CD8-positive, alpha-beta T cell (primary cell): ENCODE measurements at regions of chr12 and their contacts with region 1.

Region 1: DNA sequence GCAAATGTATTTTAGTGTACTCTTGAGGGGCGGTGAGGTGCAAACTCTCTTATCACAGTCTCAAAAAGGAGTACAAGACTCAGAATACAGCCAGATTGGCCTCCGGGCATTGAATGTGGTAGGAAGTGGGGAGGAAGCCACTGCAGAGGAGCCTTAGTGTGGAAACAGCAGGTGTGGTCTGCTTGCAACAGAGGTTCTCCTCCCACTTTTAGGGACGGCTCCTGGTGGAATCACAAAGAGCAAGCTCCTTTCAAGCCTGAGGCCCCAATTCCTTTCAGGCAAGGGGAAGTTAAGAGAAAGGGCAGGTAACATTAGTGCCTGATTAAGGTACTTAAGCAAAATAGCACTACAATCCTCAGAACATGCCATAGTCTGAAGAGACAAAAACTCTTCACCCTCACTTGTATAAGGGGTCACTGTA is 23.7 kb upstream of the SLC2A3 start:
- DNase-seq: peak in 7 of 9 experiments; percentile 45 to 81 (median 62)
- ATAC-seq: peak; percentile 25
- H3K4me3 ChIP-seq: peak overlapping the region; percentile 58 to 65
- H3K4me3 Mint-ChIP-seq: peak overlapping the region; percentile 87
- H3K27ac ChIP-seq: peak overlapping the region; percentile 84 to 85
- H3K27ac Mint-ChIP-seq: peak overlapping the region; percentile 94
- H3K4me1 ChIP-seq: peaks cover 33% of the 10 kb centered on the region
- H3K4me1 Mint-ChIP-seq: peaks cover 39% of the 10 kb centered on the region
- H3K27me3 ChIP-seq: no peaks in the 10 kb centered on the region
- H3K27me3 Mint-ChIP-seq: no peaks in the 10 kb centered on the region
- CTCF ChIP-seq: no peak

Region 2: DNA sequence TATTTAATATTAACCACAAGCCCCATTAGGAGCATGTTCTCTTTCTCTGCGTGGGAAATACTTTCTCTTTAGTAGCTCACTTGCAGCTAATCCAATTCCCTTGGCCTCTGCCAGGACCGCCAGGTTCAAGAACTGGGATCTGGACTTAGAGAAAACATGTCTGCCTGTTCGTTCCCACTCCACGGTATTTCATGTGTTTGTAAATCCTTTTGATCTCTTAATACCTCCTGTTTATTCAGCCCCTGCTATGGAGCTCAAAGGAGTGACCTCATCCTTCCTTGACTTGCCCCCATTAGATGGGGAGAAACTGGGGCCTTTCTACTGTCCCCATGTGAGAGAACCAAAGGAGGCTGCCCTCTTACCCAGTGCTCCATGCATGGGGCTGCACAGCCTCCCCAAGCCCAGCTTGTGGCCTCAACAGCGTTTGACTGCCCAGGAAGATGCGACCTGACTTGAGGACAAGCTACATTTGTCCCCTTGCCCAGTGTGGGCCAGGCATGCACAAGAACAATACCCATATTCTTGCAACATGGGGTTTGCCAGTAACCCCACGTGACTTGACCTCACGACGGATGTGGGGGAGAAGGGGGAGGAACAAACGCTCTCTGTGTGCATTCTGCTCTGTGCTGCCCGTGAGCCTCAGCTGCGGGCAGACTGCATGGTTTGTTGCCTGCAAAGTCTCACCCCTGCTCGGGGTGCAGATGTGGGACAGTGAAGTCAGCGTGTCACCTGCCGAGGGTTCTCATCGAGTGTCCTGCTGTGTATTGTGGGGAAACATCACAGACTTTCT is 1729.2 kb before region 1 on chr12:
- CTCF ChIA-PET with region 1: no interaction called
- POLR2A ChIA-PET with region 1: no interaction called
- intact Hi-C with region 1: no loop called
- DNase-seq: peak; percentile 53 to 91 (median 79)
- ATAC-seq: peak; percentile 96
- H3K4me3 ChIP-seq: no peak overlapping the region
- H3K4me3 Mint-ChIP-seq: peak overlapping the region; percentile 38
- H3K27ac ChIP-seq: peak overlapping the region; percentile 3 to 55
- H3K27ac Mint-ChIP-seq: peak overlapping the region; percentile 90
- H3K4me1 ChIP-seq: peaks cover 33% of the 10 kb centered on the region
- H3K4me1 Mint-ChIP-seq: peaks cover 34% of the 10 kb centered on the region
- H3K27me3 ChIP-seq: no peaks in the 10 kb centered on the region
- H3K27me3 Mint-ChIP-seq: no peaks in the 10 kb centered on the region
- CTCF ChIP-seq: no peak

Region 3: GRCh38 chr12:7638760-7639555 is 320.8 kb before region 1 on chr12:
- CTCF ChIA-PET with region 1: no interaction called
- POLR2A ChIA-PET with region 1: no interaction called
- intact Hi-C with region 1: no loop called
- DNase-seq: peak; percentile 40 to 89 (median 77)
- ATAC-seq: peak; percentile 67
- H3K4me3 ChIP-seq: peak overlapping the region; percentile 35 to 39
- H3K4me3 Mint-ChIP-seq: peak overlapping the region; percentile 69
- H3K27ac ChIP-seq: peak overlapping the region; percentile 30 to 40
- H3K27ac Mint-ChIP-seq: peak overlapping the region; percentile 73
- H3K4me1 ChIP-seq: peaks cover 32% of the 10 kb centered on the region
- H3K4me1 Mint-ChIP-seq: peaks cover 38% of the 10 kb centered on the region
- H3K27me3 ChIP-seq: no peaks in the 10 kb centered on the region
- H3K27me3 Mint-ChIP-seq: peaks cover 4% of the 10 kb centered on the region
- CTCF ChIP-seq: peak; percentile 79

Region 4: GRCh38 chr12:7859552-7859951 is 100.2 kb before region 1 on chr12:
- CTCF ChIA-PET with region 1: no interaction called
- POLR2A ChIA-PET with region 1: interaction called, 4 read pairs
- intact Hi-C with region 1: loop called in 1 of 2 experiments (anchors 1 kb)
- DNase-seq: no peak
- ATAC-seq: no peak
- H3K4me3 ChIP-seq: no peak overlapping the region
- H3K4me3 Mint-ChIP-seq: no peak overlapping the region
- H3K27ac ChIP-seq: no peak overlapping the region
- H3K27ac Mint-ChIP-seq: no peak overlapping the region
- H3K4me1 ChIP-seq: no peaks in the 10 kb centered on the region
- H3K4me1 Mint-ChIP-seq: peaks cover 9% of the 10 kb centered on the region
- H3K27me3 ChIP-seq: no peaks in the 10 kb centered on the region
- H3K27me3 Mint-ChIP-seq: peaks cover 5% of the 10 kb centered on the region
- CTCF ChIP-seq: no peak

Region 5: DNA sequence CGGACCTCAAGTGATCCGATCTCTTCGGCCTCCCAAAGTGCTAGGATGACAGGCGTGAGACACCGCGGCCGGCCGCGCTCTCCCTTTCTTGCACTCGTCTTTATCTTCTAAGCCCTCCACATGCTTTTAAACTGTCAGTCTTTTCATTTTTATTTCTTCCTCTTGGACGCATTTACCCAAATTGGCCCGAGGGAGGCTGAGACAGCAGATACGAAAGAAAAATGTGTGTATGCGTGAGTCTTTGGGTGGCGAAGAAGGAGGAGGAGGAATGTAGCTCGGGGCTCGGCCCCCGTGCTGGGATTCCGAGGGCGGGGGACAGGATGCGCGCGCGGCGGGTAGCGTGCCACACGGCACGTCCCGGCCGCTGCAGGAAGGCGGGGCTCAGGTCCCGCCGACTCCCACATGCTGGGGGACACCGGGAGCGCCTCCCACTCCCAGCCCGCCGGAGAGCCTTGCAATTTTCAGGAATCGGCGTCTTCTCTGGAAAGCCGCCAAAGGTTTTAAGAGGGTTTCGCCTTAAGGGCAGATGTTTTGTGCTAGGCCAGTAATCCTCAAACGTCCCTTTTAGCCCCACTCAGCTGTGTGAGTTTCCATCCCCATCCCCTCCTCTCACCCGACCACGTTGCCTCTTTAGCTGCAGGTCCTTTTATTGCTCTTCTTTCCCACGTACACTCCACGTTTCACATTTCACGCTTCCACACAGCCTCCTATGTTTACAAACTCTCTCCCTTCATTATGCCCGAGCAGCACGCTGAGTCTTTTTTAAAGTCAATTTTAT is 11.0 kb after region 1 on chr12:
- CTCF ChIA-PET with region 1: interaction called, 19 read pairs
- POLR2A ChIA-PET with region 1: interaction called, 25 read pairs
- intact Hi-C with region 1: loop called (anchors 1 kb)
- DNase-seq: peak; percentile 61 to 96 (median 88)
- ATAC-seq: peak; percentile 87
- H3K4me3 ChIP-seq: peak overlapping the region; percentile 67 to 90
- H3K4me3 Mint-ChIP-seq: peak overlapping the region; percentile 83
- H3K27ac ChIP-seq: peak overlapping the region; percentile 90 to 94
- H3K27ac Mint-ChIP-seq: peak overlapping the region; percentile 96
- H3K4me1 ChIP-seq: peaks cover 15% of the 10 kb centered on the region
- H3K4me1 Mint-ChIP-seq: peaks cover 27% of the 10 kb centered on the region
- H3K27me3 ChIP-seq: no peaks in the 10 kb centered on the region
- H3K27me3 Mint-ChIP-seq: no peaks in the 10 kb centered on the region
- CTCF ChIP-seq: no peak

Region 6: GRCh38 chr12:7989827-7990551 is 30.3 kb after region 1 on chr12:
- CTCF ChIA-PET with region 1: interaction called, 30 read pairs
- POLR2A ChIA-PET with region 1: interaction called, 6 read pairs
- intact Hi-C with region 1: loop called (anchors 1 to 2 kb)
- DNase-seq: peak; percentile 21 to 82 (median 62)
- ATAC-seq: peak; percentile 90
- H3K4me3 ChIP-seq: no peak overlapping the region
- H3K4me3 Mint-ChIP-seq: peak overlapping the region; percentile 63
- H3K27ac ChIP-seq: peak overlapping the region; percentile 28 to 60
- H3K27ac Mint-ChIP-seq: peak overlapping the region; percentile 88
- H3K4me1 ChIP-seq: peaks cover 13% of the 10 kb centered on the region
- H3K4me1 Mint-ChIP-seq: peaks cover 19% of the 10 kb centered on the region
- H3K27me3 ChIP-seq: no peaks in the 10 kb centered on the region
- H3K27me3 Mint-ChIP-seq: no peaks in the 10 kb centered on the region
- CTCF ChIP-seq: no peak

Region 7: DNA sequence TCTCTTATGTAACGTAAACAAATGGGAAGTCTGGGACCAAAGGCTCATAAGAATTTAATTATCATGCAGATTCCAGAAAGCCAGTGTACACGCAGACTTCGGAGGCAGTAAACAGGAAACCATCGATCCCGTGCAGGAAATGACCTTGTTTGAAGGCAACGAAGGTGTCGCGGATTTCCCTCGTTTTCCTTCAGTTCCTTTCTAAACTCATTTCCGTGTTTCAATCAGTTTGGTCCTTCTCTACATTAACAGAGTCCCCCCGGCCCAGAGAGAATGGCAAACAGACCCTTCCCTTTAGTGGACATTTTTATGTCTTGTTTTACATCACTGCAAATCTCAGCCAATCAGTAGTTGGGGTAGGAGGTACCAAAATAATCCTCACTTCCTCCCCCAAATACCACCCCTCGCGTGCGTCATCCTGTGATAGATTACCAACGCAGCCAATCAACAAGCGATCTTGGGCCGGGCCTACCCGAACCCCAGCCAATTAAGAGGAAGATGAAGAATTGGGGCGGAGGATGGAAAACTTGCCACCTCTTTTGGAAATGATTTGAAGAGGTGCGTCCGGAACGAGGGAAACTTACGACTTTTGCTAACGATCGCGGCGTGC is 66.7 kb after region 1 on chr12:
- CTCF ChIA-PET with region 1: no interaction called
- POLR2A ChIA-PET with region 1: interaction called, 11 read pairs
- intact Hi-C with region 1: loop called (anchors 1 kb)
- DNase-seq: peak; percentile 90 to 99 (median 94)
- ATAC-seq: peak; percentile 89
- H3K4me3 ChIP-seq: peak overlapping the region; percentile 84 to 93
- H3K4me3 Mint-ChIP-seq: peak overlapping the region; percentile 95
- H3K27ac ChIP-seq: peak overlapping the region; percentile 97 to 100
- H3K27ac Mint-ChIP-seq: peak overlapping the region; percentile 100
- H3K4me1 ChIP-seq: peaks cover 6% of the 10 kb centered on the region
- H3K4me1 Mint-ChIP-seq: peaks cover 21% of the 10 kb centered on the region
- H3K27me3 ChIP-seq: no peaks in the 10 kb centered on the region
- H3K27me3 Mint-ChIP-seq: no peaks in the 10 kb centered on the region
- CTCF ChIP-seq: no peak

Region 8: DNA sequence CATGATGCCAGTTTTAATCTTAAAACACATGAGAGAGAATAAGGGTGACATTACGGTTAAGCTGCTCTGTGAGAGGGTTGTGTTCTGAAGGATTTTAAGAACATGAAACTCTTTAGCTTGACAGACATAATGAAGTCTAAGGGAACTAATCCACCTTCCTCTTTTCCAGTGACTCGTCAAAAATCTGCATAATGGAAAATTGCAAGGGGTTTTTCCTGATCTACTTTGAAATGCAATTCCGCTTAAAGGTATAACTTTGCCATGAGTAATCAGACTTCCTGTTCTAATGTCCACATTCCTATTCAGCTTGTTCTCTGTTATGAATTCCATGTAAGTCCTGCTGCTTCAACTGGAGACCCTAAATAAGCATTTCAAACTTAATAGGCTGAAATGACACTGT is 197.1 kb after region 1 on chr12 and contains the start of gene ZNF705A:
- CTCF ChIA-PET with region 1: no interaction called
- POLR2A ChIA-PET with region 1: no interaction called
- intact Hi-C with region 1: no loop called
- DNase-seq: peak in 1 of 9 experiments; percentile 15
- ATAC-seq: no peak
- H3K4me3 ChIP-seq: no peak within 1 kb of the TSS
- H3K4me3 Mint-ChIP-seq: no peak within 1 kb of the TSS
- H3K27ac ChIP-seq: no peak within 1 kb of the TSS
- H3K27ac Mint-ChIP-seq: no peak within 1 kb of the TSS
- H3K4me1 ChIP-seq: peaks cover 18% of the 10 kb centered on the region
- H3K4me1 Mint-ChIP-seq: peaks cover 23% of the 10 kb centered on the region
- H3K27me3 ChIP-seq: no peaks in the 10 kb centered on the region
- H3K27me3 Mint-ChIP-seq: peaks cover 4% of the 10 kb centered on the region
- CTCF ChIP-seq: no peak
- total RNA-seq, gene ZNF705A: not detected